CD4-positive, alpha-beta memory T cell (primary cell): ENCODE measurements at regions of chr18 and their contacts with region 1.

Region 1: DNA sequence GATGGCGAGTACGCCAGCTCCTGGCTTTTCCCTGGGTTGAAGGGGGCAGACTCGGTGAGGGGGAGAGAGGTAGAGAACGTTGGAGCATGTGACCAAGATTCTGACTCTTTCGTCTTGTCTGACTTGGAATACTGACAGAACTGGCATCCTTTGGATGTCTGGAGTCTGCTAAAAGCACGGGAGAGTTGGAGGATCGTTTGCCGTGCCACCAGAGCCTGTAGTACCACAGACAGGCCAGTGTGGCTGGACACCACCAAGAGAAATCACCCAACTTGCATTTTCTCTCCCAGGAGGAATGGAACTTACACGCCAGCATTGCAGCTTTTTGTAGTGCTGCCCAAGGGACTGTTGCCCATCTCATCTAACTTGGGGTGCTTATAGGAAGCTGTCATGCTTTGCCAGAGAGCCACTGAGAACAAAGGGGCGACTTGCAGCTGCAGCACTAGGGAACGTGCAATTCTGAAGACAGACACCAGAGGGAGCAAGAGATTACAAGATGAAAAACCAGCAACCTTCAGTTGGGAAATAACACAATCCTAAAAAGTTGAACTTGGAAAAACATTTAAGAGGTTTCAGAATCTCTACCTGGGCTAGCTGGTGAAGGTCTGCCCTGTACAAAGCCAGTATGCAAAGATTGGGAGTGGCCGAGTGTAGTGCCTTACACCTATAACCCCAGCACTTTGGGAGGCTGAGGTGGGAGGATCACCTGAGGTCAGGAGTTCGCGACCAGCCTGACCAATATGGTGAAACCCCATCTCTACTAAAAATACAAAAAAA is 24.1 kb downstream of the PSMG2 start:
- DNase-seq: peak; percentile 55 to 68 (median 62)
- H3K4me3 ChIP-seq: no peak overlapping the region
- H3K4me3 Mint-ChIP-seq: no peak overlapping the region
- H3K27ac ChIP-seq: no peak overlapping the region
- H3K27ac Mint-ChIP-seq: peak overlapping the region in 2 of 7 donors; percentile 9 to 82
- H3K4me1 ChIP-seq: no peaks in the 10 kb centered on the region
- H3K4me1 Mint-ChIP-seq: peaks cover 0 to 5% (median 1%) of the 10 kb centered on the region in 4 donors
- H3K27me3 ChIP-seq: no peaks in the 10 kb centered on the region
- H3K27me3 Mint-ChIP-seq: no peaks in the 10 kb centered on the region

Region 2: DNA sequence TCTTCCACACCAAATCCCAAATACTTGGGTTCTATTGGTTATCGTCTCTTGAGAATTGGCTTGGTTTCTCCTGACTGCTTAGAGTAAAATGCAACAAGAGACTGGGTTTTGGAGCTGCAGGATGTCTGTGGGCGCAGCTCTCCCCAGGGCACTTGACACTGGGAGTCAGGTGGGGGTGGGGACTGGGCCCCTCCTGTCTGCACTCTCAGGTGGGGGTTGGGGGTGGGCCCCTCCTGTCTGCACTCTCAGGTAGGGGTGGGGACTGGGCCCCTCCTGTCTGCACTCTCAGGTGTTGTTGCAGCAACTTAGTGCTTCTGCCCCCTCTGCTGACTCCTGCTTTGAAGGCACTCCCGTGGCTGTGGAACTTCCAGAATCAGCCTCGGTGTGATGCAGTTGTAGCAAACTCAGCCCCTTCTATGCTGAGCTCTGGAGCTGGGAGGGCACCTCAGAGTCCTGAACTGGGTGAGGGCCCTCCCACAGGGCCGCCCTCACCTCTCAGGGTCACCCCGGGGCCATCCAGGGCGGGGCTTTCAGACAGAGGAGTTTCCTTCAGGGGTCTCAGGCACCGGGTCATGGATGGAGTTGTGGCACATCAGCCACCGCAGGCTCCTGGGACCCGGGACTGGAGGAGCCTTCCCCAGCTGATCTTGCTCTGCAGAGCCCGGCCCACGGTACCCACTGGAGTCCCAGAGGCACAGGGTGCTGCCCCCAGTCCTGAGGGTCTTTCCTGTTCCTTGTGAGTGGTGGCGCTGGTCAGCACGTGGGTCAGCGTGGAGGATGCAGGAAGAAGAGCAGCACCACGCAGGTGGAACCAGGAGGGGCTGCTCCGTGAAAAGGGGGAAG is 495.7 kb before region 1 on chr18:
- CTCF ChIA-PET with region 1: no interaction called
- POLR2A ChIA-PET with region 1: no interaction called
- intact Hi-C with region 1: no loop called
- DNase-seq: no peak
- H3K4me3 ChIP-seq: no peak overlapping the region
- H3K4me3 Mint-ChIP-seq: no peak overlapping the region
- H3K27ac ChIP-seq: no peak overlapping the region
- H3K27ac Mint-ChIP-seq: no peak overlapping the region
- H3K4me1 ChIP-seq: no peaks in the 10 kb centered on the region
- H3K4me1 Mint-ChIP-seq: no peaks in the 10 kb centered on the region
- H3K27me3 ChIP-seq: no peaks in the 10 kb centered on the region
- H3K27me3 Mint-ChIP-seq: peaks cover 5 to 17% of the 10 kb centered on the region in 2 donors

Region 3: DNA sequence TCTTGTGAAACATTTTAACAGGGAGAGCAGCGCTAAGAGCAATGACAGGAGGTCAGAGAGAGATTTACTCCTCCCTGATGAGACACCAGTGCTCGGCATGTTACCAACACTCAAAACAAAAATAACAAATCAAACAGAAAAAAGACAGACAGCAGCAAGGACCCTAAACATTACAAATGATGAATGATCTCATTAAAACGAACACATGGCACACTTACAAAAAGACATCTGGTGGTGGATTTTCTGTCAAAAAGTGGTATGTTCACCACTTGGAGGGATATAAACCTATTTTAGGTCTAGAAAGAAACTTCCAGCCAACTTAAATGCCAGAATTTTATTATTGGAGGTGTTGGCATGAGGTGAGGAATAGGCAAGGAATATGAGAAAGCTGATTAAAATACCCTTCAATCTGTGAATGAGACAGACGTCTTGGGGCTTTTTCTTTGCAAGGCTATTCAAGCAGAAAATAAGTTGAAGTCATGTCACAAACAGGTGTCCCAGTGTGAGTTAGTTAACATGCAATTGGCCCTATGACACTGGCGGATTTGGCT is 206.4 kb before region 1 on chr18:
- CTCF ChIA-PET with region 1: no interaction called
- POLR2A ChIA-PET with region 1: no interaction called
- intact Hi-C with region 1: no loop called
- DNase-seq: no peak
- H3K4me3 ChIP-seq: no peak overlapping the region
- H3K4me3 Mint-ChIP-seq: no peak overlapping the region
- H3K27ac ChIP-seq: no peak overlapping the region
- H3K27ac Mint-ChIP-seq: no peak overlapping the region
- H3K4me1 ChIP-seq: no peaks in the 10 kb centered on the region
- H3K4me1 Mint-ChIP-seq: no peaks in the 10 kb centered on the region
- H3K27me3 ChIP-seq: no peaks in the 10 kb centered on the region
- H3K27me3 Mint-ChIP-seq: peaks cover 4 to 5% of the 10 kb centered on the region in 2 donors

Region 4: GRCh38 chr18:12694032-12694431 is 32.9 kb before region 1 on chr18:
- CTCF ChIA-PET with region 1: no interaction called
- POLR2A ChIA-PET with region 1: no interaction called
- intact Hi-C with region 1: no loop called
- DNase-seq: no peak
- H3K4me3 ChIP-seq: no peak overlapping the region
- H3K4me3 Mint-ChIP-seq: no peak overlapping the region
- H3K27ac ChIP-seq: no peak overlapping the region
- H3K27ac Mint-ChIP-seq: peak overlapping the region in 1 of 7 donors; percentile 25
- H3K4me1 ChIP-seq: no peaks in the 10 kb centered on the region
- H3K4me1 Mint-ChIP-seq: peaks cover 0 to 11% (median 4%) of the 10 kb centered on the region in 4 donors
- H3K27me3 ChIP-seq: no peaks in the 10 kb centered on the region
- H3K27me3 Mint-ChIP-seq: no peaks in the 10 kb centered on the region

Region 5: DNA sequence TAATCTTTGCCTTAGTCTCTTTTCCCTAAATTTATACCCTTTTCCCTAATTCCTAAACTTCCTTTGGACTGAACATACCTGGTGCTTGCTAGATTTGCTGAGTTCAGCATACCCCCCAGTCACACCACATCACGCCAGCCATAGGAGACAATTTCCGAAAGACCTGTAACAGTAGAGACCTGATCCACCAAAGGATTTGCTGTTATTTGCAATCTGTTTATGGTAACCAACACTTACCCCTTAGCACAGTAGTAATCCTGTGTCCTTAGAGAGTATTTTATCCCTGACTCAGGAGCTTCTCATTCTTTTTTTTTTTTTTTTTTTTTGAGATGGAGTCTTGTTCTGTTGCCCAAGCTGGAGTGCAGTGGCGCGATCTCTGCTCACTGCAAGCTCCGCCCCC is 15.5 kb before region 1 on chr18:
- CTCF ChIA-PET with region 1: interaction called, 10 read pairs
- POLR2A ChIA-PET with region 1: interaction called, 3 read pairs
- intact Hi-C with region 1: no loop called
- DNase-seq: no peak
- H3K4me3 ChIP-seq: no peak overlapping the region
- H3K4me3 Mint-ChIP-seq: no peak overlapping the region
- H3K27ac ChIP-seq: no peak overlapping the region
- H3K27ac Mint-ChIP-seq: no peak overlapping the region
- H3K4me1 ChIP-seq: no peaks in the 10 kb centered on the region
- H3K4me1 Mint-ChIP-seq: peaks cover 1 to 8% (median 7%) of the 10 kb centered on the region in 4 donors
- H3K27me3 ChIP-seq: no peaks in the 10 kb centered on the region
- H3K27me3 Mint-ChIP-seq: no peaks in the 10 kb centered on the region

Region 6: DNA sequence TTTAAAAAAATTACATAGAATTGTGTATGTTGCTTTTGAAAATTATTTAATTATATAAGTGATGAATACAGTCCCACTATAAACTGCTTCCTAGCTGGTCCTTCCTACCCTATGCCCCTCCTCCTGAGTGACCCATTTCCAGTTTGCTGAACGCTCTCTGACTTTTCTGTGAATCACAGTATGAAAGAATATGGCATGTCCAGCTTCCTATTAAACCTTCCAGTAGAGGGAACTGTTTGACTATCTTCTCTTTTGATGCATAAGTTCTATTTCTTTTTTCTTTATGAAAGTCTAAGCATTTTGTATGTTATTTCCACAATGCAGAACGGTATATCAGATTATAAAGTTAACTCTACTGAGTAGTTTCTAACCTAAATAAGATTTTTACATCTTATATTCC is 17.1 kb after region 1 on chr18:
- CTCF ChIA-PET with region 1: interaction called, 25 read pairs
- POLR2A ChIA-PET with region 1: no interaction called
- intact Hi-C with region 1: no loop called
- DNase-seq: peak in 4 of 5 donors; percentile 33 to 43 (median 36)
- H3K4me3 ChIP-seq: no peak overlapping the region
- H3K4me3 Mint-ChIP-seq: no peak overlapping the region
- H3K27ac ChIP-seq: no peak overlapping the region
- H3K27ac Mint-ChIP-seq: no peak overlapping the region
- H3K4me1 ChIP-seq: no peaks in the 10 kb centered on the region
- H3K4me1 Mint-ChIP-seq: peaks cover 0 to 2% (median 0%) of the 10 kb centered on the region in 4 donors
- H3K27me3 ChIP-seq: no peaks in the 10 kb centered on the region
- H3K27me3 Mint-ChIP-seq: no peaks in the 10 kb centered on the region